ENCODE measurements at regions of chr7 and their contacts with region 1.

Region 1: DNA sequence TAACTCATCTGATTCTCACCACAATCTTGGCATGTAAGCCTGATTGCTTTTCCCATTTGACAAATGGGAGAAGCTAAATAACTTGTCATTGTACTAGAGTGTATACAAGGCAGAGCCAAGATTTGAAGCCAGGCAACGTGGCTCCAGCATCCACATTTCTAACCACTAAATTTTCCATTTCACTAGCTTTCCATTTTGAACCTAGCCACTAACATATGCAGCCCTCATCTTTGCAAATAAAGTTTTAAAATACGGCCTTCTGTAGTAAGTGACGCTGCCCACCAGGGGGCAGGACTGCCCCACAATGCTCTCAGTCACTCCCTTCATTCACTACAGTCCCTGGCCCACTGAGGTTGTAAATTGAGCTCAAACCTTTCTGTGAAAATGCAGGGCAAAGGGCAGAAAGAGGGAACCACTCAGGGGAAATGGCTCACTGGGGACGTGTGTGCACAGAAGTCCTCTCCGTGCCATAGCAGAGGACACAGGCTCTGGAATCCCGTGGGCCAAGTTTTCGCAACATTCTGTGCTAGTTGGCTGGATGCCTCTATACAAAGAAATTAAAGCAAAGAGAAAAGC is 315.7 kb downstream of the TNS3 start:
- DNase-seq: peak; percentile 44
- H3K4me3 ChIP-seq: no peak overlapping the region
- H3K27ac ChIP-seq: peak overlapping the region; percentile 18
- H3K4me1 ChIP-seq: peaks cover 17% of the 10 kb centered on the region
- H3K27me3 ChIP-seq: no peaks in the 10 kb centered on the region
- CTCF ChIP-seq: peak; percentile 96

Region 2: DNA sequence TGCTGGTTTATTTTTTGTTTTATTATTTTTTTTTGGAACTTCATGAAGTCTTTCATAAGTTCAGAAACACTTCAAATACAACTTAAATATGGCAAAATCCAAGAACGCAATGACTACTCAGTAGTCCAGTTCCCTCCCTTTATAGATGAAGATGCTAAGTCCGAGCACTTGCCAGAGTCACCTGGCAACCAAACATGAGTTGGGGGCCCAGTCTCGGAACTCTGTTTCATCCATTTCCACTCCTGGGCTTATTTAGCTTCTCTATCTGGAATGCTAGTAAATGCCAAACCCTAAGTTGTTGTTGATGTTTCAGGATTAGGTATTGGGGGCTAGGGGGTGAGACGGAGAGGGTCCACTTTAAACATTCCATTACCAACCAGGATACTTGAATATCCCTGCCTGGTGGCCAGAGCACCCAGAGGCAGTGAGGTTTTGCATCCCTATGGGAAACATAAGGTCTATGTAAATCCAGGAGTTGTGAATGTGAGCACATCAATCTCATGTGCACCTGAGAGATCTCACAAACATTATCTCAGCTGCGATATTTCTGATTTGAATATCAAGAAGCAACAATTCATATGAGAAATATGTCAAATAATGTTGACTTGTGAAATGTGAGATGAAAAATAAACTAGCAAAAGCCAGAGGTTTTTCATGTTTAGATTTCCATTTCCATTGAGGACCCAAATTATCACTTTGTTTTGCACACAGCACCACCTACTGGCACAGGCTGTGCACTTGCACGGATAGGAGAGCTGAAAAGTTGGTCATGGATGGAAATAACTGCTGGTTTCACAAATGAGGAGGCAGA is 552.8 kb after region 1 on chr7:
- intact Hi-C with region 1: loop called (anchors 2 kb)
- DNase-seq: peak; percentile 50
- H3K4me3 ChIP-seq: no peak overlapping the region
- H3K27ac ChIP-seq: no peak overlapping the region
- H3K4me1 ChIP-seq: peaks cover 16% of the 10 kb centered on the region
- H3K27me3 ChIP-seq: no peaks in the 10 kb centered on the region
- CTCF ChIP-seq: peak; percentile 93

Measured in left ventricle myocardium inferior (tissue), 1 donor.